ENCODE measurements at regions of chr16 and their contacts with region 1.

Region 1: GRCh38 chr16:8305201-8305600 is 285.1 kb downstream of the TMEM114 start:
- DNase-seq: no peak

Region 2: GRCh38 chr16:9327253-9327652 is 1022.1 kb after region 1 on chr16:
- intact Hi-C with region 1: loop called in 1 of 2 experiments (anchors 5 kb)
- DNase-seq: no peak

Measured in posterior vena cava (tissue), 2 donors.